A549 (cell line): ENCODE measurements at regions of chr17 and their contacts with region 1.

Region 1: DNA sequence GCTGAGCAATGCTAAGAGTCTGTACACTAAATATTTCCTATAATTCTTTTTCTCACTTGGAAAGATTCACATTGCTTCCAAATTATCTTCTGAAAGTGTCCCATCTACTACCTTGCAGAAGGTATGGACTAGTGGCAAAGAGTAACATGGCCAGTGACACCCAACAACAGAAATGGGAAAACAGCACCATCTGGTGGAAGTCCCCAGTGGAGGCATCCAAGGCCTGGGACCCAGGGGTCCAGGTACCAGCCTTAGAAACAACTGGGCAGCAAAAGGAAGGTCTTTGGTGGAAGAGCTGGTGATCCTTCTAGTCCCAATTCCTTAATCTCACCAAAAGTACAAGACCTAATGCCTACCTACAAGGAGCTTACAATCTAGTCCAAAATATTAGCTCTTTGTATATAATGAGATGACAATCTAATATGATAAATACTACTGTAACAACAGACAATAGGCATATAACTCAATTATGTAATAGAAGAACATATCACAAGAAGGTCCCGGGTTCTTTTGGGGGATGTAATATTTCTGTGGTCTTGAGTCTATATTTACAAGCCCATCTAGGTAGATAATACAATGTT is 55.3 kb downstream of the SKAP1 start:
- DNase-seq: peak; percentile 74 to 76
- ATAC-seq: peak; percentile 94 to 99
- H3K4me3 ChIP-seq: no peak overlapping the region
- H3K27ac ChIP-seq: no peak overlapping the region
- H3K4me1 ChIP-seq: no peaks in the 10 kb centered on the region
- CTCF ChIP-seq: peak; percentile 85
- EP300 ChIP-seq: no peak
- POLR2A ChIP-seq: no peak
- RAD21 ChIP-seq: peak; percentile 88 to 97

Region 2: DNA sequence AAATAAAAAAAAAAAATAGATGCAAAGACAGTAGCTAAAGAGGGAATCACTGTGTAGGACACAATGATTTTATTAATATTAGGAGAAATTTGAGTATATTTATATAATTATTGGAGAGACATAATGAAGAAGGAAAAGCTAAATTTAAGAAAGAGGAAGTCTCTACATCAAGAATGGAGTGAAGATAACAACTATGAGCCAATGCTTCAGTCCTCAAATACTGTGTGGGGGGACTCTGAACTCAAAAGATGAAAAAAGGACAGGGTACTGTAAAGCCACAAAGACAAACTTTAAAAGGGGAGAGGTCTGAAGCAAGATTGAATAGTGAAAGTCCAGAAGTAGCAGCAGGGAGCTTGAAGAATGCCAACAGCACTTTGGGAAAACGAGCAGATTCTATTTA is 10.6 kb after region 1 on chr17:
- CTCF ChIA-PET with region 1: interaction called, 10 read pairs
- POLR2A ChIA-PET with region 1: no interaction called
- DNase-seq: no peak
- ATAC-seq: no peak
- H3K4me3 ChIP-seq: no peak overlapping the region
- H3K27ac ChIP-seq: no peak overlapping the region
- H3K4me1 ChIP-seq: no peaks in the 10 kb centered on the region
- CTCF ChIP-seq: no peak
- EP300 ChIP-seq: no peak
- POLR2A ChIP-seq: no peak
- RAD21 ChIP-seq: no peak

Region 3: DNA sequence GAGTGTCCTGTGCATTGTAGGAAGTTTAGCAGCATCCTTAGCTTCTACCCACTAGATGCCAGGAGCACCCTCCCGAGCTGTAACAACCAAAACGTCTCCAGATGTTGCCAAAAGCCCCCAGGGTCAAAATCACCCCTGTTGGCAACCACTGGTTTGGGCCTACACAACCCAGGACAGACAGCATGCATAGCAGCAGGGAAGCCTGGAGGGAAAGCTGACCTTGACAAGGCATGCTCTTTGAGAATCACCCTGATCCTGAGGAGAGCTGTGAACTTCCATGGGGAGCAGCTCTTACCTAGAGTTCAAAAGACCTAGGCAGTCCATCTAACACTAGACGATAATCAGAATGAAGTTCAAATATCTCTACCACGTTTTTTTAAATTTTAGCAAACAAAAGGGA is 46.1 kb after region 1 on chr17:
- CTCF ChIA-PET with region 1: no interaction called
- POLR2A ChIA-PET with region 1: no interaction called
- DNase-seq: no peak
- ATAC-seq: no peak
- H3K4me3 ChIP-seq: no peak overlapping the region
- H3K27ac ChIP-seq: no peak overlapping the region
- H3K4me1 ChIP-seq: no peaks in the 10 kb centered on the region
- CTCF ChIP-seq: no peak
- EP300 ChIP-seq: no peak
- POLR2A ChIP-seq: no peak
- RAD21 ChIP-seq: no peak